Left cardiac atrium (tissue), 4 donors: ENCODE measurements at regions of chr7 and their contacts with region 1.

Region 1: GRCh38 chr7:25259587-25260243 is 31.4 kb upstream of the NPVF start:
- DNase-seq: peak; percentile 55
- ATAC-seq: peak; percentile 77 to 78

Region 2: DNA sequence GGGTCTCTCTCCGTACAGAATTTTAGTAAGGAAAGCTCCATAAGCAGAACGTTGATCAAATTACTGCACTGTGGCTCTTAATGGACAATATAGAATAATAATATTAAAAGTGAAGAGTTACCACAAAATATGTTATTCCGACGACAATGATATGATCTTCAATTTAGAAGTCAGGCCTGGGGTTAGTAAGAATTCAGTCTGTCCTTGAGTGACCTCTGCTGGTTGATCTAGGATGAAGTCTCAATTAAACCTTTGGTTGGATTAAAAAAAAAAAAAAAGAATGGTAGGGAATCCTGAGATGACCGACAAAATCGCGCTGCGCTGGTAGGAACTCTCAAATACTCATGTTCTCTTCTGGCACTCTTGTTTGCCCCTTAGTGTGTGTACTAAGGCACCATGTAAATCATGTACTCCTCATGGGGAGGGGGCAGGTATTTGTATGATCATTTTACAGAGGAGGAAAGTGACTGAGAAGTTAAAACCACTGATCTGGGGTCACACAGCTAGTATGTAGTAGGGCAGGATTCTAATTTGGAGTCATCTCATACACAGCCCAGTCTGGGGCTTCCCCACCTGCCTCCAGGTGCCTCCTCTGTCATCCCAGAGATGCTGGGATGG is 129.9 kb after region 1 on chr7:
- intact Hi-C with region 1: loop called in 1 of 2 experiments (anchors 1 kb)
- DNase-seq: no peak
- ATAC-seq: peak; percentile 30 to 32

Region 3: DNA sequence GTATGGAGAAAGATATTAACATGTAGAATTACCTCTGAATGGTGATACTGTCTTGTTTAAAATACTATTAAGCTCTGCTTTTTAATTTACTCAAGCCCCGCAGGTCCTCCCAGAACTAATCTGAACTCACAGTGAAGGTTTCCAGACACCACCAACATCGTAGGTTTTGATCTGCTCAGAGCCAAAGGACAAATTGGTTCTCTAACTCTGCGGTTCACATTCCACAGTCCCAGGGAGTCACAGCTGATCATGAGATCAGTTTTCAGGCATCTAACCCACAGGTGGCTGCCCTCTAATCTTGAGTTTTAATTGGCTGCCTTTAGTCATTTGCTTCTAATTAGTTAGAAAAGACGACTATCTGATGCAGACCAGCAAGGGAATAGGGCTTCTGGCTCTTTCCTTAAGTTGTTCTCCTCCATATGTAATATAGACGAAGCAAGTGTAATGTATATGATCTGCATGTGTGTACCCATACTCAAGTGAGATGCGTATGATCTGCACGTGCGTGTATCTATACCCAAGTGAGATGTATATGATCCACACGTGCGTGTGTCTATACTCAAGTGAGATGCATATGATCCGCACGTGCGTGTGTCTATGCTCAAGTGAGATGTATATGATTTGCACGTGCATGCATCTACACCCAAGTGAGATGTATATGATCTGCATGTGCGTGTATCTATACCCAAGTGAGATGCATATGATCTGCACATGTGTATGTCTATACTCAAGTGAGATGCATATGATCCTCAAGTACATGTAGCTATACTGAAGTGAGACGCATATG is 300.1 kb after region 1 on chr7:
- intact Hi-C with region 1: loop called (anchors 2 to 5 kb)
- DNase-seq: no peak
- ATAC-seq: no peak

Region 4: GRCh38 chr7:25851332-25852210 is 591.9 kb after region 1 on chr7:
- intact Hi-C with region 1: loop called (anchors 5 kb)
- DNase-seq: peak; percentile 80
- ATAC-seq: peak; percentile 75 to 77